Right ventricle myocardium superior (tissue), 1 donor: ENCODE measurements at regions of chrX and their contacts with region 1.

Region 1: DNA sequence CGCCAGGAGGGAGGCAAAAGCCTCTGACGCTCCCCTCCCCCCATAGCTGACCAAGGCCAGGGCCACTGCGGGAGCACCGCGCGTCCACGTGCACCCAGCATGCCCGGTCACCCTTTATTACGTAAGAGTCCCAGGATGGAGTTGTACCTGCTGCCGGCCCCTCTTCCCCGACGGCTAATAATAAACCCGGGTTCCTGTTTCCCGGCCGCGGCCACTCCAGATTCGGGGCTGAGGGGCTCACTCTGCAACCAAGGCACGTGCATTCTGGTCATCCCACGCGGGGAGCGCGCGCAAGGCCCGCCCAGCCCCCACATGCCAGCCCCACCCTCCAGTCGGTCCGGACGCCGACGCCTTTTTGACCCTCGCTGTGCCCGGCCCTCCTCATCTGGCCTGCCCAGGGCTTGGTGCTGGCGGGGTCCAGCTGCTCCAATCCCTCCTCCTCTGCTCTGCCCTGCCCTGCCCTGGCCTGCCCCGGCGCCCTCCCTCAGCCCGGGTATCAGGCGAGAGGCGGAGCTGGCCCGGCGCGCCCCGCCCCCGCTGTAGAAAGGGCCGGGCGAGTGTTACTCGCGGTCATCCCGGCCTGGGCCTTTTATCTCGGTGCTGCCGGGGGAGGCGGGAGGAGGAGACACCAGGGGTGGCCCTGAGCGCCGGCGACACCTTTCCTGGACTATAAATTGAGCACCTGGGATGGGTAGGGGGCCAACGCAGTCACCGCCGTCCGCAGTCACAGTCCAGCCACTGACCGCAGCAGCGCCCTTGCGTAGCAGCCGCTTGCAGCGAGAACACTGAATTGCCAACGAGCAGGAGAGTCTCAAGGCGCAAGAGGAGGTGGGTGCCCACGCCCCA is 2.5 kb downstream of the MID1IP1 start:
- DNase-seq: peak; percentile 91
- ATAC-seq: peak; percentile 82

Region 2: DNA sequence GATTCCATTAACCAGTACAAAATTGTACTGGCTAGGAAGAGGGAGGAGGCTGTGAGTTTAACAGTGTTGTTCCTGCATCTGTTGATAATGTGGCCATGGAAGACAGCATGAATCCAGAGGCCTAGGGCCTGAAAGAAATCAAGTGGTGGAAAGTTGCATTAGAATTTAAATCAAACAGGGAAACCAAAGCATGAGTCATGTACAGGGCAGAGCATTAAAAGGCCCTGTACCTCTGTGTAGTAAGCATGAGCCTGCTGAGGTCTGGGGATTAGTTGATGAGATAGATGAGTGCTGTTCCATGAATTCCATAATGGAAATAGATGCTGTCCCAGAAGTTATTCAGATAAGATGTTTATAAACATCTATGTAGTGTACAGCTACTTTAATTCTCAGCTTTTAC is 55.8 kb after region 1 on chrX:
- intact Hi-C with region 1: loop called (anchors 10 kb)
- DNase-seq: no peak
- ATAC-seq: no peak

Region 3: DNA sequence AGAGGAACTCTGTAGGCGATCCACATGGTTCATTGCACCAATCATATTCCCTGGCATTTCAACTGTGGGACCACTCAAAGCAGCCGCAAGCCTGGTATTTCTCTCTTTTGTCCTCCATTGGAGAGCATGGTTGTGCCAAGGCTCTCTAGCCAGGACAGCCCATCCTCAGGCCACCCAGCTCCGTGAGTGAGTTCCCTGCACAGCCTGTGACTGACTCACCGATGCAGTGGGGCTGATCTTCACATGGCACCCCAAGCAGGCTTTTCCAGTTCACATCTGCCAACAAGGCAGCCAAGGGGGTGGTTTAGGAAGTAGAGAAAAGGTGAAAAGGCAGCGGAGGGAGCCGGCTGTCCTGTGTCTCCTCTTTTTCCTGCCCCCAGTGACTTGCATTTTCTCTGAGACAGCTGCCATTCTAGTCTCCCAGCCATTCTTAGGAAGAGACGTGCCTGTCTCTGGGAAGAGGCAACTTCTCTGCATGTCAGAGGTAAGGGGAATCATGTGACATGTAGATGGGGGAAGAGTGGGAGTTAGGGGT is 66.6 kb after region 1 on chrX:
- intact Hi-C with region 1: no loop called
- DNase-seq: no peak
- ATAC-seq: no peak

Region 4: DNA sequence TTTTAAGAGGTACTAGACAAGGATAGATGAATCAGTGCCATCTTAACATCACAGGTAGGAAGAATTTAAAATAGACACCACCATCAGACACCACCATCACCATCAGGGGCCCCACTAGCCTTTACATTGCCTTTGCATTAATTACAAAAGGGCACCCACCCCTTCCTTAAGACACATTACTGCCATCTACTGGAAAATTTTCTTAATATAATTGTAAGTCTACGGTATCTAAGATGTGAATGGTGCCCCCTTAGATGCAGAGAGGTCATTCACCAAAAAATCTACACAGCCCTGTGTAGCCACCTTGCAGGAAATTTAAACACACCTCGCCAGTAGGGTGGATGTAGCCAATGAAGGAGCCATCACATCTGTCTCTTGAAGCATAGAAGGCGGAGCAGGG is 181.6 kb after region 1 on chrX:
- intact Hi-C with region 1: loop called (anchors 5 kb)
- DNase-seq: no peak
- ATAC-seq: peak; percentile 36